AG04449 (cell line): ENCODE measurements at regions of chr5 and their contacts with region 1.

Region 1: GRCh38 chr5:72268753-72269410 is 51.2 kb downstream of the MRPS27 start:
- DNase-seq: no peak
- H3K4me3 ChIP-seq: no peak overlapping the region
- CTCF ChIP-seq: peak; percentile 51

Region 2: DNA sequence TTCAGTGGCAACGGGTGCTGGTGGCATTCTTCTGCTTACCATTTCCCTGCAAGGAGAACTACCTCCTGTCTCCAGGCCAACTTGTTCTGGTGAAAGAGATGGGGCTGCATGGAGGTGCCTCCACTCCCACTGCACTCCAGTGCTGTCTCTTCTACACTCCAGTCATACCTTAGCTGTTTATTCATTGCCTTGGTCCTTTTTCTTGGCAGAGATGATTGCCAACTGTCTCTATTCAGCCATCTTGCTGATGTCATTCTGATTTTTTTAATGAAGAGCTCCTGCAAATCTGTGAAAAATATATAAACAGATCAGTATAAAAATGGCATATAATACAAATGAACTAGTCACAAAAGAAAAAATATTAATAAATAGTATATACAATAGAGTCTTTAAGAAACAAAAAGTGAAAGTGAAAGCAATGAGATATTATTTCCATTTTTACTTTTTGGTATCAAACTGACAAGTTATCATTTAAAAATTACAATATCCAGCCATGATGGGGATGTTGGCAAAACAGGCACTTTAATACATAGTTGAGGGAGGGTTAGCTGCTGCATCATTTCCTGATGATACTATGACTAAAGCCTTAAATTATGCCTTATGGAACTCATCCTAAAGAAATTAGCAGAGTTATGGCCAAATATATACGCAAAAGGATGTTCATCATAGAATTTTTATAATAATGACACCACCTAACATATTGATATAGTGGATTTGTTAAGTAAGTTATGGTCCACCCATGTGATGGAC is 440.4 kb before region 1 on chr5:
- CTCF ChIA-PET with region 1: no interaction called
- POLR2A ChIA-PET with region 1: no interaction called
- DNase-seq: peak; percentile 31
- H3K4me3 ChIP-seq: no peak overlapping the region
- CTCF ChIP-seq: no peak

Region 3: GRCh38 chr5:72108202-72109061 is 160.4 kb before region 1 on chr5:
- CTCF ChIA-PET with region 1: interaction called, 13 read pairs
- POLR2A ChIA-PET with region 1: no interaction called
- DNase-seq: no peak
- H3K4me3 ChIP-seq: peak overlapping the region; percentile 90
- CTCF ChIP-seq: no peak

Region 4: DNA sequence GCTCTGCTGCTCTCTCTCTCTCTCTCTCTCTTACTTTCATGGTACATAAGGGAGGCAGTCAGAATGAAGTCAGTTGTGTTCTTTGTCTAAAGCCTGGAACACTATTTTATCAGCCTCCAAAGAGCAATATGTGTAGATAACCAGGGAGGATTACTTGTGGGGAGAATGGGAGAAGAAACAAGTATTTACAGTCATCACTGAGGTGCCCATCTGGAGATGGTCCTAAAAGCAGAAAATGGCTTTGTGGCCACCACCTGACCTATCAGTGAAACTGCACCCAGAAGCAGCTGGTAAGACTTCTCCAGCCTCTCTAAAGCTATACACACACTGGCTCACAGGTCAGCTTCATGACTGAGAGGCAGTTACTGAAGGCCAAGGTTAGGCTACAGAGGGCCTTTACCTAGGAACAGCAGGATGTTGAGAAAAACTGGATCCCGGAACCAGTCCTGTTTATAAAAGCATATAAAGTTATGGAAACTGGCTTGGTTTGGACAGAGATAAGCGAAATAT is 24.0 kb before region 1 on chr5:
- CTCF ChIA-PET with region 1: interaction called, 29 read pairs
- POLR2A ChIA-PET with region 1: no interaction called
- DNase-seq: no peak
- H3K4me3 ChIP-seq: no peak overlapping the region
- CTCF ChIP-seq: peak; percentile 61

Region 5: GRCh38 chr5:72252574-72253155 is 16.2 kb before region 1 on chr5:
- CTCF ChIA-PET with region 1: interaction called, 29 read pairs
- POLR2A ChIA-PET with region 1: no interaction called
- DNase-seq: no peak
- H3K4me3 ChIP-seq: no peak overlapping the region
- CTCF ChIP-seq: no peak

Region 6: DNA sequence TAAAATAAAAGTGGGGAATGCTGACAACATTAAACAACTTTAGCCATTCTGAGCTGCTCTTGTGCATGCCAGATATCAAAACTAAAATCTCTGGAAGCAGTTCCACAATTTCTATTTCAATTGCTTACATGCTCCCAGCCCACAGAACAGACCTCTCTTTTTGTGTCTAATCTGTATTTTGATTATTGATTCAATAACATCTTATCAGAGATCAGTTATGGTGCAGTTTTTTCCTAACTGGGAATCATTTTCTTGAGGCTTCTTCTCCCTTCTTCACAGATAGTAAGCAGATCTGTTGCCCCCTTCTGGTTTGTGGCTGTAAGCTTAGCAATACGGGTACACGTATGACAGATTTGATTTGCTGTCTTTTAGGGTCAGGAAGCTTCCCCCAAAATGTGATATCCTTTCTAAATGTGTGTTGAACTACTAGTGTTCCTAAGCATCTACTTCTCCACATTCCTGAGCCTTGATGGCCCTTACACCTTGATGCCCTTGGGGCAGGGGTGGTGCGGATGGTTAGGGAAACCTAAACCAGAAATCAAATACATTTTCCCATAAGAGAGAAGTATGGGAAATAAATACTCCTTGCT is 11.8 kb after region 1 on chr5:
- CTCF ChIA-PET with region 1: interaction called, 19 read pairs
- POLR2A ChIA-PET with region 1: no interaction called
- DNase-seq: no peak
- H3K4me3 ChIP-seq: no peak overlapping the region
- CTCF ChIP-seq: peak; percentile 63

Region 7: GRCh38 chr5:72347801-72348305 is 79.0 kb after region 1 on chr5:
- CTCF ChIA-PET with region 1: no interaction called
- POLR2A ChIA-PET with region 1: no interaction called
- DNase-seq: peak; percentile 84
- H3K4me3 ChIP-seq: no peak overlapping the region
- CTCF ChIP-seq: no peak

Region 8: DNA sequence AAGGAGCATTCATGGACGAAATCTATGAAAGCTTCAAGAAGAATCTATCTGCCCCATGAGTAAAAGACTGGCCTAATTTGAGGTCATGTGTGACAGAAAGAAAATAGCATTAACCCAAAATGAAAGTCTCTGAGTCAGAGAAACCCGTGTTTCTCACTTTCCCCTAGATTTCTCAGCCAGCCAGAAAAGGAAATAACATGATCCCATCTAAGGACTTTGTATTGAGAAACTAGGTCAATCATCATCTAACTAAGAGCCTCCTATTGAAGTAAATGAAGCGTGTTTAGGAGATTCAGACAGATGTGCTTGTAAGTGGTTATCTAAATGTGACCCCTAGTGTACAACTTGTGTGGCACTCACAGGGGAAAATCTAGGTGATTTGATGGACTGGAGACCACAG is 315.6 kb after region 1 on chr5:
- CTCF ChIA-PET with region 1: no interaction called
- POLR2A ChIA-PET with region 1: no interaction called
- DNase-seq: no peak
- H3K4me3 ChIP-seq: no peak overlapping the region
- CTCF ChIP-seq: no peak